ENCODE measurements at regions of chr15 and their contacts with region 1.

Region 1: DNA sequence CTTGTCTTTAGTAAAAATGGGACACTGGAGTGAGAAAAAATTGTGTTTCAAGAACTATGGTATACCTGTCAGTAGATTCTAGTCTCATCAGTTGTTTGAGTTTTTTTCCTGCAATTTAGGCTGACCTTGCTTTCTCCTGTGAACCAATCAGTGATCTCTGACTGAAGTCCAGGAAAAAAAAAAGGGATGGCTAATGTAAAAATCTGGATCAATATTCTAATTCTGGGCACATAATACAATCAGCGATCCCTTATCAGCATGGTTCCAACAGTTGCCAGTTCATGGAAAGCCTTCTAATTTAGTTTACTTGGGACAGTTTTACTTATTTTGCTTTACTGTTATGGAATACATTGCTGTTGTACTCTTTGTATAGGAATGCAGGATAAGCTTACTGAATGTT is 17.0 kb downstream of the TRPM7 start:
- DNase-seq: no peak
- H3K4me3 ChIP-seq: no peak overlapping the region
- H3K27ac ChIP-seq: no peak overlapping the region
- H3K4me1 ChIP-seq: no peaks in the 10 kb centered on the region
- H3K27me3 ChIP-seq: no peaks in the 10 kb centered on the region

Region 2: DNA sequence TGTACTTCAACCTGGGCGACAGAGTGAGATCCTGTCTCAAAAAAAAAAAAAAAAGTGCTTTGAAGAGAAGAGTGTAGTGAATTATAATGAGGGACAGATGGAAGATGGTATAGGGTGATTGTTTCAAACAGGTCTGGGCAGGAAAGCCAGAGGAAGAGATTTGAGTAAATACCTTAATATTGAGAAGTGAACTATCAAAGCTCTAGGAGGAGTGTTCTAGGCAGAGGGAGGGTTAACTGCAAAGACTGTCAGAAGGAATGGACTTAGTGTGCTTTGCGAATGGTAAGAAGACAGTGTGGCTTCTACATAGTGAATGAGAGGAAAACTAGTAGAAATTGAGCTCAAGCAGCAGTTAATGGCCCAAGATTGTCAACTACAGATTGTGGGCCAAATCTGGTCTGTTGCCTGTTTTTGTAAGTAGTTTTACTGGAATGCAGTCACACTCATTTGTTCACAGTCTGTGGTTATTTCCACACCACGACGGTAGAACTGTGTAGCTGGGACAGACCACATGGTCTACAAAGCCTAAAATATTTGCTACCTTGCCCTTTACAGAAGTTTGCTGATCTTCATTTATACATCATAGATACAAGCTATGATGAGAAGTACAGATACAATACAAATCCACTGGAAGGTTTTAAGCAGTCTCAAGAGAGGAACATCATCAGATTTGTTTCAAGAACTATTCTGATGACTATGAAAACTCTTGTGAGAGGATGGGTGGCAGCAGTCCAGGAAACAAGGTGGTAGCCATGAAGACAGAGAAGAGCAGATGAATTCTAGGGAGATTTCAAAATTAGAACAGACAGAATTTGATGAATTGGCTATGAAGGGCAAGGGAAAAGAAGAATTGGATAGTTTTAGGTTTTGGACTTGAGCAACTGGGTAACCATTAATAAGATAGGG is 106.6 kb before region 1 on chr15:
- in situ Hi-C with region 1: no loop called
- DNase-seq: peak; percentile 36
- H3K4me3 ChIP-seq: no peak overlapping the region
- H3K27ac ChIP-seq: no peak overlapping the region
- H3K4me1 ChIP-seq: no peaks in the 10 kb centered on the region
- H3K27me3 ChIP-seq: no peaks in the 10 kb centered on the region

Region 3: DNA sequence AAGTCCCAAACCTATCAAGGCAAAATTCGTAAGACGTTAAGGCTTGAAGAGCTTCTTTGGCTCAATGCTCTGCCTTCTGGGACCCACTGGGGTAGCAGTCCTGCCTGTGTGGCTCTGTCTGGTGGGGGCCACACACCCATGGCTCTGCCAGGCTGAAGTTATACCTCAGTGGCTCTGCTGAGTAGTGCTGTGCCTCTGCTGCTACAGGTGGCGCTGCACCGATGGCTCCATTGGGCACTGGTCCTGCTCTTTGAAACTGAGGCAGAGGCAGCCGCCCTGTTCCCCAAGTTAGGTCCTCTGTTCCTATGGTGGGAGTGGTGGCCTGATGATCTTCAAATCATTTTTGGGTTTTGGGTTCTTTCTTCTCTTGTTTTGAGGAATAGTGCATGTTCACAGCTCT is 170.9 kb after region 1 on chr15:
- in situ Hi-C with region 1: no loop called
- DNase-seq: no peak
- H3K4me3 ChIP-seq: no peak overlapping the region
- H3K27ac ChIP-seq: no peak overlapping the region
- H3K4me1 ChIP-seq: no peaks in the 10 kb centered on the region
- H3K27me3 ChIP-seq: no peaks in the 10 kb centered on the region

Region 4: DNA sequence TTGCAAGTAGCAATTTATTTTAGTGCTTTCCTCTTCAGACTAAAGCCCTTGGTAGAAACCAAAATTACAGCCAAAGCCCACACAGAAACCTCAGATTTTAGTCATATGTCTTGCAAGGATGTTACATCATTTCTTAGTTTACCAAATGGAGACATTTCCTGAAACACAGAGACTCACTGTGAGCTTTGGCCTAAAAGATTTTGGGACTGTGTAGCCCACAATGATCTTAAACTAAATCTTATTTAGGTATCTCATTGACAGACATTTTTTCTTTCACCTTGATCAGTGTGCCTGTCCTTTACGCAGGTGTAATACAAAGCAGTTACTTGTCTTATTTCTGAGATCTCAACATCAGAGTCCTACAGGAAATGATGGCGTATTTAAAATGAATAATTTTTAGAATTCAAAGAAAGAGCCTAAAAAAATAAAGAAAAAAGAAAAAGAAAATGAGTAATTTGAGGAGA is 211.1 kb after region 1 on chr15:
- in situ Hi-C with region 1: loop called (anchors 10 kb)
- DNase-seq: peak; percentile 86
- H3K4me3 ChIP-seq: no peak overlapping the region
- H3K27ac ChIP-seq: peak overlapping the region; percentile 96
- H3K4me1 ChIP-seq: peaks cover 48% of the 10 kb centered on the region
- H3K27me3 ChIP-seq: no peaks in the 10 kb centered on the region

Region 5: DNA sequence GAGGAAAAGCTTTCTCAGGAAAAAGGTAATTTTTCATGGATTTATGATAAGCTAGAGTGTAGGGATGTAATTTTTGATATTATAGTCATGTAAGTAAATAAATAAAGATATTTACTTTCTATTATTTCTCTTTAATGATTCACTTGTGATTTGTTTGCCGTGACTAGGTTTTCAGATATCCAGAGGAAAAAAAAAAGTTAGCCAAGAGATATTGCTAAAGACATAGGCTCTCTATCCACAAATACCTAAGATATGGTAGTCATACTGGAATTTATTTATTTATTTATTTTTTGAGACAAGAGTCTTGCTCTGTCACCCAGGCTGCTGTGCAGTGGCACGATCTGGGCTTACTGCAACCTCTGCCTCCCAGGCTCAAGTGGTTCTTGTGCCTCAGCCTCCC is 298.7 kb after region 1 on chr15:
- in situ Hi-C with region 1: no loop called
- DNase-seq: peak; percentile 51
- H3K4me3 ChIP-seq: no peak overlapping the region
- H3K27ac ChIP-seq: no peak overlapping the region
- H3K4me1 ChIP-seq: no peaks in the 10 kb centered on the region
- H3K27me3 ChIP-seq: no peaks in the 10 kb centered on the region